Adrenal gland (tissue), 19 donors: ENCODE measurements at regions of chr1 and their contacts with region 1.

Region 1: DNA sequence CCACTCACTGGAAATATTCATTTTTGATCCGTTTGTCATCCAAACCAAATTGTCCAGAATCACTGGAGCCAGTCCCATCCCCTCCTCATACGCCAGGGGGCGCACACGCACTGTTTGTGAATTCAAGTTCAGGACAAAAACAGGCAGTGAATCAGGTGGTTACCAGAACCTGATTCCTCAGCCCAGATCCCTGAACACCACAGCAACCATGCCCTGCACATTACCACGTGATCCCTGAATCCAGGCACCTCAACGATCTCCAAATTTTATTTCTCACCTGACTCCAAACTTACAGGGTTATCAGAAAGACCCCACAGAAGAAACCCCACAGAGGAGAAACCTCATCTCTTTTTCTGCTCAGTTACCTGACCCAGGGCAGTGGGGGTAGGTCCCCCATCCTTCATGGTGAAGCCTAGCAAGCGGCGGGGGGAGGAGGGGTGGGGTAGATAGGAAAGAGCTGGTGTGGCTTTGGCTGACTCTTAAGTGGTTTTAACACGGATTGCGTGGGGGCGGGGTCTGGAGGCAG is 1.4 kb upstream of the PTPRF start:
- DNase-seq: peak; percentile 83 to 96 (median 87)
- H3K4me3 ChIP-seq: no peak overlapping the region
- H3K27ac ChIP-seq: no peak overlapping the region
- H3K4me1 ChIP-seq: peaks cover 0 to 6% of the 10 kb centered on the region in 2 donors
- H3K27me3 ChIP-seq: no peaks in the 10 kb centered on the region
- CTCF ChIP-seq: peak; percentile 93 to 97 (median 96)
- POLR2A ChIP-seq: no peak

Region 2: GRCh38 chr1:43650310-43651085 is 121.2 kb after region 1 on chr1:
- intact Hi-C with region 1: loop called (anchors 2 to 5 kb)
- DNase-seq: peak; percentile 96 to 99 (median 98)
- H3K4me3 ChIP-seq: peak overlapping the region; percentile 67 to 96 (median 74)
- H3K27ac ChIP-seq: peak overlapping the region; percentile 80 to 98 (median 91)
- H3K4me1 ChIP-seq: peaks cover 22 to 37% of the 10 kb centered on the region in 2 donors
- H3K27me3 ChIP-seq: no peaks in the 10 kb centered on the region
- CTCF ChIP-seq: no peak
- POLR2A ChIP-seq: peak; percentile 98 to 99

Region 3: DNA sequence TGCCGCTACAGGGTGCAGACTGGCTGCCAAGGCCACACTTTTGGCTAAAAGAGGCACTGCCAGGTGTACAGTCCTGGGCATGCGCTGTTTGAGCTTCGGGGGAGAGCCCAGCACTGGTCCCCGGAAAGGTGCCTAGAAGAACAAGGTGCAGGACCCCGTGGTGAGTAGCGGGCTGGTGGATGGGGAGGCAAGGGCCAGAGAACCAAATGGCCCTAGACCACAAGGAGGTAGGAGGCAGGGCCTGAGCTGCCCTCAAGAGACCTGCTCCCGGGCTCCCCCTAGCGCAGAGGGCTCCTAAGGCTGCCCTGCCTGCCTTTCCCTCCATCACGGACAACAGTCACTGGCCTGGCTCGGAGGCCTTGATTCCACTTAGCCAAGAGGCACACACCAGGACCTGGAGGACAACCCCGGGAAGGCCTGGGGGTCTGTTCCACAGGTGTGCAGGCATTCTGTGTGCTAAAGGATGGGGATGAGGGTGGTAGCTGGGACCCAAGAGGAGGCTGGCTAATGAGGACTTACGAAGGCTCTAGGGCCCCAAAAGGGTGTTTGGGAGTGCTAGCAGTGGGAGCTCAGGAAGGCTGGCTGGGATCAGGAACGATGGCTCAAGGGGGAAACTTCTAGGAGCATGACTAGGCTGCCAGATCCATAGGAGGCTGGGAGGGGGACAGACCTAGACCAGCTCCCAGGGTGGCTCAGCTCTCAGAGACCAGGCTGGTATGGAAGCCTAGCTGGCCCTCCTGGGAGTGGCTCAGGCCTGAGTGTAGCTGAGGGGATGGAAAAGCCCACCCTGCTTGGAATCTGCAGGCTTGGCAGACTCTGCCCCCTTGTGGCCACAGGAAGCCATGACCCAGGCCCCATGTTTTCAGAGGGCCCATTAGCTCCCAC is 405.1 kb after region 1 on chr1:
- intact Hi-C with region 1: loop called (anchors 5 to 10 kb)
- DNase-seq: peak in 6 of 7 donors; percentile 53 to 81 (median 72)
- H3K4me3 ChIP-seq: peak overlapping the region in 2 of 4 donors; percentile 32 to 35
- H3K27ac ChIP-seq: no peak overlapping the region
- H3K4me1 ChIP-seq: peaks cover 8 to 15% of the 10 kb centered on the region in 2 donors
- H3K27me3 ChIP-seq: no peaks in the 10 kb centered on the region
- CTCF ChIP-seq: peak; percentile 74 to 87 (median 80)
- POLR2A ChIP-seq: no peak

Region 4: DNA sequence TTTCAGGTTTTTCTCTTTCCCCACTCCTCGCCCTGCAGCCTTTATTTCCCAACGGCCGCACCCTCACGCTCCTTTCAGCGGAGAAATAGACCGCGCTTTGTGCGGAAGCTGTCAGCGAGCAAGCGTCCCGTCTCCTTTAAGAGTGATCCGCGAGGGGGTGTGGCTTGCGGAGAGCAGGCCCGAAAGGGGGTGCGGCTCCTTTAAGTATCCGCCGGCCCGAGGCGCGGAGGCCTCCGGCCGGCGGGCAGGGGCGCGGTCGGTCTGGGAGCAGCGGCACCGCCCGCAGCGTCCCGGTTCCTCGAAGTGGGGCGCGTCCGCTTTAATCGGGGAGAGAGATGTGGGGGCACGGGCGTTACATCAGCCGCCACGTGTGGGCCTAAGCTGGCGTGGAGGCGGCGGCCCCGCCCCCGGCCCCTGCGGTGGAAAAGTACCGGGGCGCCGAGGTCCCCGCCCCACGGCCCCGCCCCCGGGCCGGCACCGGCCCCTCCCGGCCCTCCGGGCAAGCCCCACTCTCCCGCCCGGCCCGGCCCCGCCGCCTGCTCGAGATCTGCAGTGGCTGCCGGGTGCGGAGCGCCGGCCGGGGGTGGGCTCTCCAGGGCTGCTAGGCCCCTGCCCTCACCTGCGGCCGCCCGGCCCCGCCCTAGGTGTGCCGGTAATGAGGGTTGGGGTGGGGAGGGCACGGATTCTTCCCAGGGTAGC is 500.8 kb after region 1 on chr1:
- intact Hi-C with region 1: loop called in 1 of 2 experiments (anchors 10 kb)
- DNase-seq: peak; percentile 89 to 94 (median 93)
- H3K4me3 ChIP-seq: peak overlapping the region; percentile 40 to 84 (median 72)
- H3K27ac ChIP-seq: peak overlapping the region in 4 of 5 donors; percentile 54 to 90 (median 82)
- H3K4me1 ChIP-seq: peaks cover 14 to 25% of the 10 kb centered on the region in 2 donors
- H3K27me3 ChIP-seq: no peaks in the 10 kb centered on the region
- CTCF ChIP-seq: peak in 1 of 6 experiments; percentile 16
- POLR2A ChIP-seq: peak; percentile 17 to 70

Region 5: GRCh38 chr1:44739361-44740178 is 1210.3 kb after region 1 on chr1 and contains the start of gene KIF2C:
- intact Hi-C with region 1: no loop called
- DNase-seq: peak; percentile 95 to 98 (median 97)
- H3K4me3 ChIP-seq: peak within 1 kb of the TSS in 3 of 4 donors; percentile 1 to 69 (median 33)
- H3K27ac ChIP-seq: peak within 1 kb of the TSS in 4 of 5 donors; percentile 61 to 92 (median 89)
- H3K4me1 ChIP-seq: peaks cover 6 to 11% of the 10 kb centered on the region in 2 donors
- H3K27me3 ChIP-seq: no peaks in the 10 kb centered on the region
- CTCF ChIP-seq: peak in 1 of 6 experiments; percentile 19
- POLR2A ChIP-seq: peak in 1 of 2 donors; percentile 74
- total RNA-seq, gene KIF2C: 0.26 to 10.4 (median 1.6) TPM